ENCODE measurements at regions of chr3 and their contacts with region 1.

Region 1: GRCh38 chr3:127697551-127698240 is 24.9 kb downstream of the ABTB1 start:
- DNase-seq: peak; percentile 77
- ATAC-seq: peak; percentile 74
- H3K4me3 ChIP-seq: peak overlapping the region in 4 of 5 experiments; percentile 9 to 48 (median 42)
- H3K4me3 Mint-ChIP-seq: peak overlapping the region; percentile 82
- H3K27ac ChIP-seq: peak overlapping the region in 1 of 2 donors; percentile 12
- H3K27ac Mint-ChIP-seq: peak overlapping the region; percentile 87
- H3K4me1 ChIP-seq: peaks cover 10 to 22% of the 10 kb centered on the region in 2 donors
- H3K4me1 Mint-ChIP-seq: peaks cover 26% of the 10 kb centered on the region
- H3K27me3 ChIP-seq: no peaks in the 10 kb centered on the region
- H3K27me3 Mint-ChIP-seq: no peaks in the 10 kb centered on the region
- CTCF ChIP-seq: no peak

Region 2: GRCh38 chr3:126475413-126476114 is 1222.1 kb before region 1 on chr3 and contains the start of gene ZXDC:
- CTCF ChIA-PET with region 1: no interaction called
- POLR2A ChIA-PET with region 1: no interaction called
- intact Hi-C with region 1: loop called (anchors 10 kb)
- DNase-seq: peak; percentile 96
- ATAC-seq: peak; percentile 84
- H3K4me3 ChIP-seq: peak within 1 kb of the TSS; percentile 51 to 84 (median 65)
- H3K4me3 Mint-ChIP-seq: peak within 1 kb of the TSS; percentile 89
- H3K27ac ChIP-seq: peak within 1 kb of the TSS; percentile 61 to 73
- H3K27ac Mint-ChIP-seq: peak within 1 kb of the TSS; percentile 91
- H3K4me1 ChIP-seq: peaks cover 35 to 39% of the 10 kb centered on the region in 2 donors
- H3K4me1 Mint-ChIP-seq: peaks cover 40% of the 10 kb centered on the region
- H3K27me3 ChIP-seq: no peaks in the 10 kb centered on the region
- H3K27me3 Mint-ChIP-seq: no peaks in the 10 kb centered on the region
- CTCF ChIP-seq: peak; percentile 29
- total RNA-seq, gene ZXDC: 70.9 and 75.9 TPM in 2 replicates

Region 3: GRCh38 chr3:127590593-127591477 is 106.9 kb before region 1 on chr3 and contains the start of gene TPRA1:
- CTCF ChIA-PET with region 1: interaction called, 15 read pairs
- POLR2A ChIA-PET with region 1: no interaction called
- intact Hi-C with region 1: no loop called
- DNase-seq: peak; percentile 92
- ATAC-seq: peak; percentile 82
- H3K4me3 ChIP-seq: peak within 1 kb of the TSS; percentile 56 to 87 (median 76)
- H3K4me3 Mint-ChIP-seq: peak within 1 kb of the TSS; percentile 96
- H3K27ac ChIP-seq: peak within 1 kb of the TSS; percentile 15 to 69
- H3K27ac Mint-ChIP-seq: peak within 1 kb of the TSS; percentile 94
- H3K4me1 ChIP-seq: peaks cover 16 to 23% of the 10 kb centered on the region in 2 donors
- H3K4me1 Mint-ChIP-seq: peaks cover 31% of the 10 kb centered on the region
- H3K27me3 ChIP-seq: no peaks in the 10 kb centered on the region
- H3K27me3 Mint-ChIP-seq: no peaks in the 10 kb centered on the region
- CTCF ChIP-seq: no peak
- total RNA-seq, gene TPRA1: 19.8 and 25.2 TPM in 2 replicates

Region 4: GRCh38 chr3:127672516-127673190 is 25.0 kb before region 1 on chr3 and contains the start of gene ABTB1:
- CTCF ChIA-PET with region 1: interaction called, 5 read pairs
- POLR2A ChIA-PET with region 1: interaction called, 10 read pairs
- intact Hi-C with region 1: loop called (anchors 1 kb)
- DNase-seq: peak; percentile 88
- ATAC-seq: peak; percentile 87
- H3K4me3 ChIP-seq: peak within 1 kb of the TSS; percentile 41 to 87 (median 79)
- H3K4me3 Mint-ChIP-seq: peak within 1 kb of the TSS; percentile 94
- H3K27ac ChIP-seq: peak within 1 kb of the TSS; percentile 83 to 96
- H3K27ac Mint-ChIP-seq: peak within 1 kb of the TSS; percentile 98
- H3K4me1 ChIP-seq: peaks cover 16 to 22% of the 10 kb centered on the region in 2 donors
- H3K4me1 Mint-ChIP-seq: peaks cover 29% of the 10 kb centered on the region
- H3K27me3 ChIP-seq: no peaks in the 10 kb centered on the region
- H3K27me3 Mint-ChIP-seq: no peaks in the 10 kb centered on the region
- CTCF ChIP-seq: no peak
- total RNA-seq, gene ABTB1: 132 and 141 TPM in 2 replicates

Region 5: DNA sequence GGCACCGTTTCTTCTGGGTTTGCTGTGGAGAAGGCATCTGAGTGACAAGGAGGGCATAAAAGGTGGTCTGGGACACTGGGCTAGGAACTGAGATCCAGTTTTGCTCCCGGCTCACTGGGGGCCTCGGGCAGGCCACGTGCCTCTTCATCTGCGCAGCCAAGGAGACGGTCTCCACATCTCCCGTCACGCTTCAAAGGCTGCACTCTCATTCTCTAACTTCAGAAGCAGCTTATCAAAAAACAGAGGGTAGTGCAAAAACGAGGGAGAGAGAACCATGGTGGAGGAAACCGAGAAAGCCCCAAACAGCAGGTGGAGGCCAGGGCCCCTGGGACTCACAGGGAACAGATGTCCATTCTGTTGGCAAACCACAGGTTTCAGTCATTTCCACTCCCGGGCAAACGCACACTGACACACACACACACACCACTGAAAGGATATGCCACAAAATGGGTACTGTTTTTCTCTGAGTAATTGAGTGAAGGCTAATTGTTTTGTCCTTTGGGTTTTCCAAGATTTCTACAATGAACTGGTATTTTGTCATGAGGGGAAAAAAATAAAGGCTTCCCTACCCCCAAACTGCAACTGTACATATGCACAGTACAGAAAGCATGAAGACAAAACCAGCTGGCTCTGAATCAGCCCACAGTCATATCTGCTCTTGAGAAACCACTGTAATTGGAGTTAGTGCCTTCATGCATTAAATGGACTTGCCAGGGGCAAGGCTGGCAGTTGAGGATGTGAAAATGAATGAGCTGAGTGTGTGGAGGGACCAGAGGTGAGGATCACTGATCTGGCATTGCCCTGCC is 52.7 kb after region 1 on chr3:
- CTCF ChIA-PET with region 1: interaction called, 4 read pairs
- POLR2A ChIA-PET with region 1: no interaction called
- intact Hi-C with region 1: loop called (anchors 10 kb)
- DNase-seq: peak; percentile 32
- ATAC-seq: no peak
- H3K4me3 ChIP-seq: no peak overlapping the region
- H3K4me3 Mint-ChIP-seq: peak overlapping the region; percentile 46
- H3K27ac ChIP-seq: no peak overlapping the region
- H3K27ac Mint-ChIP-seq: peak overlapping the region; percentile 43
- H3K4me1 ChIP-seq: peaks cover 27 to 36% of the 10 kb centered on the region in 2 donors
- H3K4me1 Mint-ChIP-seq: peaks cover 53% of the 10 kb centered on the region
- H3K27me3 ChIP-seq: no peaks in the 10 kb centered on the region
- H3K27me3 Mint-ChIP-seq: no peaks in the 10 kb centered on the region
- CTCF ChIP-seq: no peak

Region 6: GRCh38 chr3:127915115-127915936 is 217.6 kb after region 1 on chr3 and contains the start of gene KBTBD12:
- CTCF ChIA-PET with region 1: no interaction called
- POLR2A ChIA-PET with region 1: no interaction called
- intact Hi-C with region 1: no loop called
- DNase-seq: no peak
- ATAC-seq: no peak
- H3K4me3 ChIP-seq: no peak within 1 kb of the TSS
- H3K4me3 Mint-ChIP-seq: peak within 1 kb of the TSS; percentile 63
- H3K27ac ChIP-seq: no peak within 1 kb of the TSS
- H3K27ac Mint-ChIP-seq: no peak within 1 kb of the TSS
- H3K4me1 ChIP-seq: peaks cover 6 to 7% of the 10 kb centered on the region in 2 donors
- H3K4me1 Mint-ChIP-seq: peaks cover 8% of the 10 kb centered on the region
- H3K27me3 ChIP-seq: peaks cover 0 to 27% (median 15%) of the 10 kb centered on the region in 4 experiments
- H3K27me3 Mint-ChIP-seq: peaks cover 35% of the 10 kb centered on the region
- CTCF ChIP-seq: no peak
- total RNA-seq, gene KBTBD12: 0.22 and 0.24 TPM in 2 replicates

Region 7: GRCh38 chr3:127970966-127971592 is 273.4 kb after region 1 on chr3:
- CTCF ChIA-PET with region 1: interaction called, 7 read pairs
- POLR2A ChIA-PET with region 1: no interaction called
- intact Hi-C with region 1: loop called (anchors 2 kb)
- DNase-seq: peak; percentile 61
- ATAC-seq: peak; percentile 43
- H3K4me3 ChIP-seq: no peak overlapping the region
- H3K4me3 Mint-ChIP-seq: no peak overlapping the region
- H3K27ac ChIP-seq: no peak overlapping the region
- H3K27ac Mint-ChIP-seq: no peak overlapping the region
- H3K4me1 ChIP-seq: no peaks in the 10 kb centered on the region
- H3K4me1 Mint-ChIP-seq: no peaks in the 10 kb centered on the region
- H3K27me3 ChIP-seq: peaks cover 0 to 2% (median under 1%) of the 10 kb centered on the region in 4 experiments
- H3K27me3 Mint-ChIP-seq: peaks cover 10% of the 10 kb centered on the region
- CTCF ChIP-seq: peak; percentile 65